K562 (cell line): ENCODE measurements at regions of chr4 and their contacts with region 1.

Region 1: GRCh38 chr4:142449771-142450373 is 396.2 kb downstream of the INPP4B start:
- DNase-seq: no peak
- ATAC-seq: no peak
- H3K4me3 ChIP-seq: no peak overlapping the region
- H3K27ac ChIP-seq: no peak overlapping the region
- H3K4me1 ChIP-seq: no peaks in the 10 kb centered on the region
- H3K27me3 ChIP-seq: no peaks in the 10 kb centered on the region
- CTCF ChIP-seq: no peak
- EP300 ChIP-seq: no peak
- POLR2A ChIP-seq: no peak
- RAD21 ChIP-seq: no peak

Region 2: DNA sequence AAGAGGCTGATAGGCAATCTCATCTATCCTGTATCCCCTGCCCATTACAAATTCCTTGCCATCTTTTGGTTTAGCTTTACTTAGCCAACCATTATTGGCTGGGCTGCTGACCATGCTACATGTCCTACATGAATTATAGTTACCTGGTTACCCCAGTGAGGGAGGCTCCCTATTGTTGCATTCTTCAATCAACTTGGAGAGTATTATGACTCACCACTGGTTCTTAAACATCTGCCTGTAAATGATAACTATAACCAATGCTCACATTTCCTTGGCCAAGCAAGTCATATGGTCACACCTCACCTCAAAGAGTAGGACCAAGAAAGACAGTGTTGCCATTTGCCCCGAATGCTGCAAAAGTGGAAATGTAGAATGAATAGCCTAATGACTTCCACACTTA is 515.9 kb before region 1 on chr4:
- CTCF ChIA-PET with region 1: no interaction called
- POLR2A ChIA-PET with region 1: no interaction called
- in situ Hi-C with region 1: no loop called
- intact Hi-C with region 1: no loop called
- DNase-seq: peak in 2 of 4 experiments; percentile 11 to 14
- ATAC-seq: no peak
- H3K4me3 ChIP-seq: no peak overlapping the region
- H3K27ac ChIP-seq: no peak overlapping the region
- H3K4me1 ChIP-seq: no peaks in the 10 kb centered on the region
- H3K27me3 ChIP-seq: no peaks in the 10 kb centered on the region
- CTCF ChIP-seq: no peak
- EP300 ChIP-seq: no peak
- POLR2A ChIP-seq: no peak
- RAD21 ChIP-seq: no peak

Region 3: DNA sequence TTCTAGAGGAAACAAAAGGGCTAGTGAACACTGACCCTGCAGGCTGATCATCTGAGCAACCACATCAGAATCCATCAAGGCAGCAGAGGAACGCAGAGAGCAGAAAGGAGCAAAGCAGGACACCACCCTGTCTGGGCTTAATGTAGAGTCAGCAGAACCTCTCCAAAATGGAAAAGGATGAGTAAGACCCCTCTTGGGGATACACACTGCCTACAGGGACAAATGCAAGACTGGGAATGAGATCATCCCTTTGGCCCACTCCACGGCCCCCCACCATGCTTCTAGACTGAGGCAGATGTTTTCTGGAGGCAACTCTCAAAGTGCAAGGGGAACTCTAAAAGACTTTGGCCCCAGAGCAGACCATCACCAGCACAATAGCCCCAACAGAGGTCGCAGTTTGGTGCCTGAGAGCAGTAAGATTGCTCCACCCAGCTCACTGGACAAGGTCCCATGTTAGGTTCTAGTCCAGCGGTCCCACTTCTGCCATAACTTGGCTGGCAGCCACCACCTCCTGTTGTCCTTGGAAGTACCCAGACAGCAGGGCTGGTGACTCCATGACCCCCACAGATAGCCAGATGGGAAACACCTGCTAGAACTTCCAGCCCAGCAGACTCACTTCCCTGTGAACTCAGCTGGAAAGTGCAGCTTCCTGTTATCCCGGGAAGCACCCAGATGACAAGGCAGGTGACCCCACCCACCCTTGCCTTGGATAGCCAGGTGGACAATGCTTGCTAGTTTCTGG is 23.5 kb after region 1 on chr4:
- CTCF ChIA-PET with region 1: no interaction called
- POLR2A ChIA-PET with region 1: no interaction called
- in situ Hi-C with region 1: no loop called
- intact Hi-C with region 1: loop called (anchors 1 kb)
- DNase-seq: no peak
- ATAC-seq: no peak
- H3K4me3 ChIP-seq: no peak overlapping the region
- H3K27ac ChIP-seq: no peak overlapping the region
- H3K4me1 ChIP-seq: no peaks in the 10 kb centered on the region
- H3K27me3 ChIP-seq: no peaks in the 10 kb centered on the region
- CTCF ChIP-seq: no peak
- EP300 ChIP-seq: no peak
- POLR2A ChIP-seq: no peak
- RAD21 ChIP-seq: no peak